ENCODE measurements at regions of chr1 and their contacts with region 1.

Region 1: DNA sequence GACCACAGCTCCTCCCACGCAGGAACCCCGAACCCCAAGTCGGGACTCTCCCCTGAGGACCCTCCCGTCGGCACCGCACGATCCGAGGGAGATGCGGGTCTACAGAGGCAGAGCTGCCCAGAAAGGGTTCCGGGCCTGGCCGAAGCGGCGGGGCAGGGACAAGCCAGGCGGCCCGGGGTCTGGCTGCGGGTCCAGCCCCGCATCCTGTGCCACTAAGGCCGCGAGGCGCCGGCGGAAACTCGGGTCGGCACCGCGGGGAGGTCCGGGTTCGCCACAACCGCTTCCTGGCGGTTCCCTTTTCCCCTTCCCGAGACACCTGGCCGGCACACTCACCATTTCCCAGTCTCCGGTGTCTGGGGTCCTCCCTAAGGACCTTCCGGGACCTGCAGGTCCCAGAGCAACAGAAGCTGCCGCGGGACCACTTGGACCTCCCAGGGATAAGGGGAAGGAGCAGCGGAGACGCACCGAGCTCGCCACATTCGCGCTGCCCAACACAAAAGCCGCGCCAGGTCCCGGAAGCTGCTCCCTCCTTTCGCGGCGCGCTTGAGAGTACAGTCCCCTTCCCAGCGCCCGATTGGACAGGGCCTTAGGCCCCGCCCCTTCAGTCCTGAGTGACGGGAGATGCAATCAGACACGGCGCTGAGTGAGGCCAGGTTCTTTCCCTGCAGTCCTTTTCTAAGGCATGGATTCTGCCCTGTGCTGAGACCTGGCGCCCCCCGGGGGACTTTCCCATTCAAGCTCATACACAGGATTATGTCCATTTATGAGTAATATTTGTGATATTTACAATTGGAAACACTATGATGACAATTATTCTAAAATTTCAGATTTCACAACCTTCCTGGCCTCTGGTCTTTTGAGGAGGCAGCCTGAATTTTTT is at the start of gene ZNF670:
- DNase-seq: peak; percentile 82
- H3K4me3 ChIP-seq: peak within 1 kb of the TSS; percentile 91
- CTCF ChIP-seq: peak; percentile 60

Region 2: DNA sequence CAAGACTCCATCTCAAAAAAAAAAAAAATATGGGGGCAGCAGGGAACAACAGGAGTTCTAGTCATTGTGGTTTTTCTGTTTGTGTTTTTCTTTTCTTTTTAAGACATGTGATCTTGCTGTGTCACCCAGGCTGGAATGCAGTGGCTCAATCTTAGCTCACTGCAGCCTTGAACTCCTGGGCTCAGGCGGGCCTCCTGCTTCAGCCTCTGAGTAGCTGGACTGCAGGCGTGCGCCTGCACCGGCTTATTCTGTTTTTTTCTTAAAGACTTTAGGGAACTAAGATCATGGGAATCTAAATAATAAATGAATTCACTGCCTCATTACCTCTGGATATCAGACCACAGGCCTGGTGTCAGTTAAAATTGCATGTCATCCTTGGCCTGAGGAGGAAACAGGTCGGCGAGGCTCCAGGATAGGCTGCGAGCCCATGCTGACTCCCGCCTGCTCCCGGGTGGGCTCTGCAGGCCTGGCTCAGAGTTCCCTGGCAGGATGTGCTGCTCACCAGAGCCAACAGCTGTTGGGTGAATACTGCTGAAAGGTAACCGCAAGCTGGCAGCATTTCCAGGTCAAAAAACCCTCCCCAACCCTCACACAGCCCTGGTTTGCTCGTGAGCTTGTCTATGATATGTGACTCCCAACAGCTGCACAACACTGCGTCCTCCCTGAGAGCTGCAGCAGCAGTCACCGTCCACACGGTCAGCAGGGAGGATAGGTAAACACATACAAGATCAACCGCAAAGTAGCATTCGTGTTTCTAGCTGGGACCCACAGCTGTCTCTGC is 296.2 kb before region 1 on chr1:
- CTCF ChIA-PET with region 1: no interaction called
- POLR2A ChIA-PET with region 1: no interaction called
- DNase-seq: no peak
- H3K4me3 ChIP-seq: no peak overlapping the region
- CTCF ChIP-seq: no peak

Region 3: DNA sequence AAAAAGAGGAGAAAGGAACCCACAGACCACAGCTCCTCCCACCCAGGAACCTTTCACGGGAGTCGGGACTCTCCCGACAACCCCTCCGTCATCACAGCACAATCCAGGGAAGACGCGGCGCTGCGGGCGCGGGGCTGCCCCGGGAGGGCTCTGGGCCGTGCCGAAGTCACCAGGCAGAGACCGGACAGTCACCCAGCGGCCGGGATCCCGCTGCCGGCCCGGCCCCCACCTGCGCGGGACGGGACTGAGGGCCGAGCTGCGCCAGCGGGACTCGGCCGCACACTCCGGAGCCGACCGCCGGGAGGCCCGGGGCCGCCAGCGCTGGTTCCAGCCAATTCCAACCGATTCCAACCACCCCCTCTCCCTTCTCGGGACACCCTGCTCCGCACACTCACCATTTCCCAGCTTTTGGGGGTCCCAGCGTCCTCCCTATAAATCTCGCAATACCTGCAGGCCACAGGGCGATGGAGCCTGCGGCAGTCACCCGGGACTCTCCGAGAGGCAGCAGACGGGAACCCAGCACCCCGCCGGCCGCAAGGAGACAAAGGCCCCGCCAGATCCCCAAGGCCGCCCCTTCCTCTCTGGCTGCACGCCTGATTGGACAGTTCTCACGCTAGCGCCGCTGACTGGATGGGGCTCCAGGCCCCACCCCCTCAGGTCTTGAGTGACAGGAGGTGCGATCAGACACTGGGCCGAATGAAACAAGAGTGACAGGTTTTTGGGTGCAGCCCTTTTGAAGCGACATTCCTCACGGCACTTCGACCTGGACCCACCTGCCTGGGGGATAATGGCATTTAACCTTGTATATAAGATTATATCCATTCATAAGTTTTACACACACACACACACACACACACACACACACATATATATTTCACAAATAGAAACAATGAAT is 70.7 kb before region 1 on chr1 and contains the start of gene ZNF695:
- CTCF ChIA-PET with region 1: no interaction called
- POLR2A ChIA-PET with region 1: no interaction called
- DNase-seq: peak; percentile 73
- H3K4me3 ChIP-seq: peak within 1 kb of the TSS; percentile 67
- CTCF ChIP-seq: no peak

Region 4: GRCh38 chr1:247089616-247090375 is 11.3 kb after region 1 on chr1:
- CTCF ChIA-PET with region 1: interaction called, 10 read pairs
- POLR2A ChIA-PET with region 1: no interaction called
- DNase-seq: no peak
- H3K4me3 ChIP-seq: no peak overlapping the region
- CTCF ChIP-seq: no peak

Measured in AG04449 (cell line).